Transverse colon (tissue), 4 donors: ENCODE measurements at regions of chr11 and their contacts with region 1.

Region 1: GRCh38 chr11:65117216-65118096 is at the start of gene ZNHIT2:
- DNase-seq: peak; percentile 100
- H3K4me3 ChIP-seq: peak within 1 kb of the TSS; percentile 61 to 86 (median 81)
- H3K27ac ChIP-seq: peak within 1 kb of the TSS; percentile 86 to 94 (median 92)
- H3K4me1 ChIP-seq: peaks cover 26 to 48% (median 34%) of the 10 kb centered on the region in 4 donors
- H3K27me3 ChIP-seq: no peaks in the 10 kb centered on the region
- CTCF ChIP-seq: peak; percentile 86 to 99 (median 94)
- EP300 ChIP-seq: no peak
- POLR2A ChIP-seq: peak; percentile 73
- total RNA-seq, gene ZNHIT2: 9.6 to 40.8 (median 12.2) TPM

Region 2: DNA sequence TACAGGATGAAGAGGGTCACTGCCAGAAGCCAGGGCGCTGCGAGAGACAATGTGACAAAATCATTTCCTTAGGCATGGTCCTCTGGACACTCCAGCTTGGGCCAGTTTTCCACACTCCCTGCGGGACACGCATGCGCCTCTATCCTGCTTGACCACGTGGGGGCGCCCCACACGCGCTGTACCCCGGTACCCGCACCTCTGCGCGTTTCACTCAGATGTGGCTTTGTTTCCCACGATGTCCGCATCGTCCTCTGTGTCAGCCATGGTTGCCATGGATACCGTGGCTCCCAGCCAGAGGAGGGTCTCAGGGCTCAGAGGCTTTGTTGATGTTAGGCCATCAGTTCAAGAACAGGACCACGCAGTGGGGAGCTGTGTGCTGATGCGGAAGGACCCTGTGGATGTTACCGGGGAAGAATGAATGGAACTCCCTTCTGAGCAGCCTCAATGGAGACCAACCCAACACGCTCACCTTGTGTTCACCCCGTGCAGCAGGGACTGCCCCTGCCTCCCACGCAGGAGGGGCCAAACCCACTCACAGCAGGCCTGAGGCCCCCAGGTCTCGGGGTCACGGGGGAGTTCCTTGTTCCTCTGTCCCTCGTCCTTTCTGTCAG is 627.5 kb before region 1 on chr11:
- in situ Hi-C with region 1: no loop called
- intact Hi-C with region 1: no loop called
- DNase-seq: peak; percentile 63
- H3K4me3 ChIP-seq: no peak overlapping the region
- H3K27ac ChIP-seq: no peak overlapping the region
- H3K4me1 ChIP-seq: no peaks in the 10 kb centered on the region
- H3K27me3 ChIP-seq: peaks cover 77% of the 10 kb centered on the region
- CTCF ChIP-seq: peak; percentile 57 to 73 (median 66)
- EP300 ChIP-seq: no peak
- POLR2A ChIP-seq: no peak

Region 3: GRCh38 chr11:65027213-65028067 is 90.0 kb before region 1 on chr11 and contains the start of gene SNX15:
- in situ Hi-C with region 1: no loop called
- intact Hi-C with region 1: loop called (anchors 5 kb)
- DNase-seq: peak; percentile 96
- H3K4me3 ChIP-seq: peak within 1 kb of the TSS; percentile 40 to 61 (median 56)
- H3K27ac ChIP-seq: peak within 1 kb of the TSS; percentile 87 to 96 (median 90)
- H3K4me1 ChIP-seq: peaks cover 12 to 27% (median 19%) of the 10 kb centered on the region in 4 donors
- H3K27me3 ChIP-seq: no peaks in the 10 kb centered on the region
- CTCF ChIP-seq: peak; percentile 75 to 86 (median 84)
- EP300 ChIP-seq: no peak
- POLR2A ChIP-seq: peak; percentile 88
- total RNA-seq, gene SNX15: 1.9 to 53.3 (median 35.9) TPM

Region 4: GRCh38 chr11:65150509-65151271 is 33.2 kb after region 1 on chr11:
- in situ Hi-C with region 1: no loop called
- intact Hi-C with region 1: no loop called
- DNase-seq: peak; percentile 89
- H3K4me3 ChIP-seq: no peak overlapping the region
- H3K27ac ChIP-seq: peak overlapping the region; percentile 63 to 78 (median 70)
- H3K4me1 ChIP-seq: peaks cover 8 to 15% (median 10%) of the 10 kb centered on the region in 4 donors
- H3K27me3 ChIP-seq: no peaks in the 10 kb centered on the region
- CTCF ChIP-seq: peak in 2 of 5 experiments; percentile 26 to 36
- EP300 ChIP-seq: no peak
- POLR2A ChIP-seq: peak; percentile 13

Region 5: DNA sequence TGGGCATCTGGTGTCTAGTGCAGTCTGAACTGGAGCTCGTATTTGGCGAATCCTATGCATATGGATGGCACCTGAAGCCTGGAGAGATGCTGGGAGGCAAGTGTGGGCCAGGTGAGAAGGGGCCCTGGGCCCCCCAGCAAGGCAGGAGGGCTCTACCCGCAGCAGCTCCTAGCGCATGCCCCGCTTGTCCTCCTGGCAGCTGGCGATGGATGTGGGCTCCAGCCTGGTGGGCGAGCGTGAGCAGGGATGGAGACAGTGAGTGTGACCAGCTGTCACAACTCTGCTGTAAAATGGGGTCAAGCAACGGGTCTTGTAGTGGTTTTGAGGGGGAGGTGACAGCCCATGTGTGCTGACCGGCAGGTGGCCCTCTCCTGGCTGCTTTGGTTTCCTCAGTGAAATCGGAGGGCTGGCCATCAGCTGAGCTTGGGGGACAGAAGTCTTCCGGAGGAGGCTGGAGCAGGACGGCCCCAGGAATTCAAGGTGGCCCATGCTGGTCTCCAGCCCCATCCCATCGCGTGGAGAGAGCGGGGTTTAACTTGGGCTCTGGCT is 281.0 kb after region 1 on chr11:
- in situ Hi-C with region 1: no loop called
- intact Hi-C with region 1: no loop called
- DNase-seq: no peak
- H3K4me3 ChIP-seq: no peak overlapping the region
- H3K27ac ChIP-seq: no peak overlapping the region
- H3K4me1 ChIP-seq: peaks cover 3 to 24% (median 11%) of the 10 kb centered on the region in 4 donors
- H3K27me3 ChIP-seq: no peaks in the 10 kb centered on the region
- CTCF ChIP-seq: no peak
- EP300 ChIP-seq: no peak
- POLR2A ChIP-seq: no peak